MCF 10A (cell line): ENCODE measurements at regions of chr4 and their contacts with region 1.

Region 1: GRCh38 chr4:1346781-1347409 is at the start of gene UVSSA:
- DNase-seq: peak; percentile 99
- H3K4me3 Mint-ChIP-seq: peak within 1 kb of the TSS; percentile 89
- H3K27ac Mint-ChIP-seq: peak within 1 kb of the TSS; percentile 83
- H3K4me1 Mint-ChIP-seq: peaks cover 32% of the 10 kb centered on the region
- H3K27me3 Mint-ChIP-seq: no peaks in the 10 kb centered on the region
- CTCF ChIP-seq: no peak
- total RNA-seq, gene UVSSA: 41.1 and 43.6 TPM in 2 replicates

Region 2: GRCh38 chr4:1177274-1178141 is 169.4 kb before region 1 on chr4:
- CTCF ChIA-PET with region 1: interaction called, 3 read pairs
- POLR2A ChIA-PET with region 1: interaction called, 11 read pairs
- intact Hi-C with region 1: no loop called
- DNase-seq: peak; percentile 62
- H3K4me3 Mint-ChIP-seq: peak overlapping the region; percentile 41
- H3K27ac Mint-ChIP-seq: peak overlapping the region; percentile 95
- H3K4me1 Mint-ChIP-seq: peaks cover 20% of the 10 kb centered on the region
- H3K27me3 Mint-ChIP-seq: no peaks in the 10 kb centered on the region
- CTCF ChIP-seq: no peak

Region 3: GRCh38 chr4:1249148-1249730 is 97.7 kb before region 1 on chr4:
- CTCF ChIA-PET with region 1: interaction called, 4 read pairs
- POLR2A ChIA-PET with region 1: interaction called, 112 read pairs
- intact Hi-C with region 1: loop called (anchors 1 kb)
- DNase-seq: peak; percentile 80
- H3K4me3 Mint-ChIP-seq: peak overlapping the region; percentile 83
- H3K27ac Mint-ChIP-seq: peak overlapping the region; percentile 81
- H3K4me1 Mint-ChIP-seq: no peaks in the 10 kb centered on the region
- H3K27me3 Mint-ChIP-seq: no peaks in the 10 kb centered on the region
- CTCF ChIP-seq: no peak

Region 4: DNA sequence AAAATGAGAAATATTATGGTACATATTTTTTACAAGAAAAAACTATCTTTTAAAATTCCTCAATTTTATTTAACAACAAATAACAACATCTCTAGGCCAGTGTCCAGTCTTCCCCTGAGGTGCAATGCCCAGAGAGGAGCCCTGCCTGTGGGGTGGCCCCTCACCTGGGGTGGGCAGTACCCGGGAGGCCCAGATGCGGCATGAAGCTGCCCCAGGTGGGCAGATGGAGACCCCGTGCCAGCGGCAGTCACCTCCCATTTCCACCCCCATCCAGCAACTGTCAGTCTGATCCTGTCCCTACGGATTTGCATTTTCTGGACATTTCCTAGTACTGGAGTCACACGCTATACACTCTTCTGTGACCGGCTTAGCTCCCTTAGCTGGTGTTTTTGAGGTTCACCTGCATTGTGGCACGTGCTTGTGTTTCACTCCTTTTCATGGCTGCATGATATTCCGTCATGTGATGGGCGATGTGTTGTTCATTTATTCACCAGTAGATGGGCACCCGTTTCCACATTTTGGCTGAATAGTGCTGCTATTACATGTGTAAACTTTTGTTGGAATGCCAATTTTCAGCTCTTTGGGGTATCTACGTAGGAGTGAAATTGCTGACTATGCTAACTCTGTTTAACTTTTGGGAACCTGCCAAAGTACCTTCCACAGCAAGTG is 69.1 kb before region 1 on chr4:
- CTCF ChIA-PET with region 1: no interaction called
- POLR2A ChIA-PET with region 1: interaction called, 4 read pairs
- intact Hi-C with region 1: loop called (anchors 1 kb)
- DNase-seq: peak; percentile 24
- H3K4me3 Mint-ChIP-seq: no peak overlapping the region
- H3K27ac Mint-ChIP-seq: no peak overlapping the region
- H3K4me1 Mint-ChIP-seq: peaks cover 9% of the 10 kb centered on the region
- H3K27me3 Mint-ChIP-seq: peaks cover 10% of the 10 kb centered on the region
- CTCF ChIP-seq: no peak

Region 5: GRCh38 chr4:1300466-1301455 is 46.1 kb before region 1 on chr4:
- CTCF ChIA-PET with region 1: interaction called, 5 read pairs
- POLR2A ChIA-PET with region 1: interaction called, 28 read pairs
- intact Hi-C with region 1: loop called (anchors 5 kb)
- DNase-seq: peak; percentile 96
- H3K4me3 Mint-ChIP-seq: peak overlapping the region; percentile 4
- H3K27ac Mint-ChIP-seq: peak overlapping the region; percentile 70
- H3K4me1 Mint-ChIP-seq: peaks cover 47% of the 10 kb centered on the region
- H3K27me3 Mint-ChIP-seq: no peaks in the 10 kb centered on the region
- CTCF ChIP-seq: no peak

Region 6: DNA sequence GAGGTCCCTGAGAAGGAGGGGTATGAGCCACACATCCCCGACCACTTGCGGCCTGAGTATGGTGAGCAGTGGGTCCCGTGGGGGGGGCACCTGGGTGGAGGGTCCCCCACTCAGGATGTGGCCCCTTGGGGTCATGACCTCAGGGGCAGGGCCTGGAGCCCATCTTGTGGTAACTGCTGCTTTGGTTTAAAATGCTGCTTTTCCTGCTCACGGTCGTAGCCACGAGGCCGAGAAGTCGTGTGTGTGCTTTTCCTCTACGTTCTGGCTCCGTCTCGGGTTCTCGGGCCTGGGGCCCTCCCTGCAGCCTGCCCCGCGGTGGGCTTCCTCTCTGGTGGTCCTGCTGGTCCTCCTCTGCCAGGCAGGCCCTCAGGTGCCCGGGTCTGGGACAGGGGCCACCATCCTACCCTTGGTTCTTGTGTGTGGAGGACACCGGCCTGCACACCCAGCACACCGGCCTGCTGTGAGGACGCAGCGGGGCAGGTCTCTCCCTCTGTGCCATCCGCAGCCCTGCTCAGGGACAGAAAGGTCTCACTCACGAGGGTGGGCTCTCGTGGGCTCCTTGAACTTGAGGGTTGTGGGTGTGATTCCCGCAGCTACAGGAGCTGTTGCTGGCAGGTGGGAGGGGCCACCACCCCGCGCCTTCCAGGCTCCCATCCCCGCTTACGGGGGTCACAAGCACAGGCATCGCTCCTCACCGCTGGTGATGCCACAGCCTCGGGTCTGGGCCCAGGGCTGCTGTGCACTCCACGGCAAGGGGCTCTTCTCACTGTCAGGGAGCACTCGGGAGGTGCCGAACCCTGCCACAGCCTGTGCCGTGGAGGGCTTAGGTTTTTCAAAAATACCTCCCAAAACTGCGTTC is 19.7 kb after region 1 on chr4:
- CTCF ChIA-PET with region 1: no interaction called
- POLR2A ChIA-PET with region 1: no interaction called
- intact Hi-C with region 1: no loop called
- DNase-seq: no peak
- H3K4me3 Mint-ChIP-seq: no peak overlapping the region
- H3K27ac Mint-ChIP-seq: no peak overlapping the region
- H3K4me1 Mint-ChIP-seq: no peaks in the 10 kb centered on the region
- H3K27me3 Mint-ChIP-seq: no peaks in the 10 kb centered on the region
- CTCF ChIP-seq: no peak

Region 7: DNA sequence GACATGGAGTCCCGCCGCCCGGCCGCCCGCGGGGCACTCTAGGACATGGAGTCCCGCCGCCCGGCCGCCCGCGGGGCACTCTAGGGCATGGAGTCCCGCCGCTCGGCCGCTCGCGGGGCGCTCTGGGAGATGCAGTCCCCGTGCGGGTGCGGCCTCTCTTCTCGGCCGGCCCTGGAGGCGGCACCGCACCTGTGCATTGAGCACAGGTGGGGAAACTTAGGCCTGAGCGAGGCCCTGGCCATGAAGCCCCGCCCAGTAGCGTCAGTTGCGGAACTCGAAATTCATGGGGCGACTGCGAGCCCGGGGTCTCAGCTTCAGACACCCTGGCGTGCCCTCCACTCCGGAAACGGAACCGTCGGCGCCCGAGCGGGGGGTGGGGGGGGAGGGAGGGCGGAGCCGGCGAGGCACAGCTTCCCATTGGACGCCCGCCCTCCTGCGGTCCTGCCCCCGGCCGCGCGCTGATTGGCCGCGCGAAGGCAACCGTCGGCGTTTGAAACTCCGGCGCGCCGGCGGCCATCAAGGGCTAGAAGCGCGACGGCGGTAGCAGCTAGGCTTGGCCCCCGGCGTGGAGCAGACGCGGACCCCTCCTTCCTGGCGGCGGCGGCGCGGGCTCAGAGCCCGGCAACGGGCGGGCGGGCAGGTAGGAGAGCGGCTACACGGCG is 374.2 kb after region 1 on chr4 and contains the starts of genes TACC3 and TMEM129:
- CTCF ChIA-PET with region 1: no interaction called
- POLR2A ChIA-PET with region 1: interaction called, 3 read pairs
- intact Hi-C with region 1: loop called (anchors 10 kb)
- DNase-seq: peak; percentile 97
- H3K4me3 Mint-ChIP-seq: peak within 1 kb of the TSS; percentile 93
- H3K27ac Mint-ChIP-seq: peak within 1 kb of the TSS; percentile 81
- H3K4me1 Mint-ChIP-seq: peaks cover 20% of the 10 kb centered on the region
- H3K27me3 Mint-ChIP-seq: no peaks in the 10 kb centered on the region
- CTCF ChIP-seq: no peak
- total RNA-seq, gene TACC3: 53.0 and 69.8 TPM in 2 replicates
- total RNA-seq, gene TMEM129: 25.5 and 38.3 TPM in 2 replicates